ENCODE measurements at regions of chr15 and their contacts with region 1.

Region 1: DNA sequence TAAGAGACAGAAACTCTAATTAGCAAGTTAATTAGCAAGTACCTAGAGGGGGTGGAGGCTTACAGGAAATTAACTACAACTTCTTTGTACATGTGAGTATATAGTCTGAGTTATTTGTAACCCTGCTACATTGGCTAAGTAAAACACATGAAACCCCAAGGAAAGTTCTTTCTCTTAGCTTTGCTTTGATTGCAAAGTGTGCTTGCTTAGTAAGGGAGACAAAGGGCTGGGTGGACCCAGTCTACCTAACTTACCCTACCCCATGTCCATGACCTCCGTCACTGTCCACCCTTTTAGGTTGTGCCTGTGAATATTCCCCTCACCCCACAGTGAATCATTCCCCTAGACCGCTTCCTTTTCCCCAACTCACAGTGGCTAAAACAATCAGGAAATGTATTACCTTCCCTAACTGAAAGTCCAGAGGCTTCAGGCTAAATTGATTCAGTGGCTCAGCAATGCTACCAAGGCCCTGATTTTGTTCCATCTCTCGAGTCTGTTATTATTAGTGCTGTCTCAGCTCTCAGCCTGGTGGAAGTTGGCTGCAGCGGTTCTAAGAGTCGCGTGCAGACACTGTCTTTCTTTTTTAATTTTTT is 31.1 kb upstream of the RYR3 start:
- DNase-seq: no peak
- ATAC-seq: no peak
- H3K4me3 ChIP-seq: no peak overlapping the region
- H3K27ac ChIP-seq: no peak overlapping the region
- H3K4me1 ChIP-seq: no peaks in the 10 kb centered on the region
- H3K27me3 ChIP-seq: no peaks in the 10 kb centered on the region

Region 2: DNA sequence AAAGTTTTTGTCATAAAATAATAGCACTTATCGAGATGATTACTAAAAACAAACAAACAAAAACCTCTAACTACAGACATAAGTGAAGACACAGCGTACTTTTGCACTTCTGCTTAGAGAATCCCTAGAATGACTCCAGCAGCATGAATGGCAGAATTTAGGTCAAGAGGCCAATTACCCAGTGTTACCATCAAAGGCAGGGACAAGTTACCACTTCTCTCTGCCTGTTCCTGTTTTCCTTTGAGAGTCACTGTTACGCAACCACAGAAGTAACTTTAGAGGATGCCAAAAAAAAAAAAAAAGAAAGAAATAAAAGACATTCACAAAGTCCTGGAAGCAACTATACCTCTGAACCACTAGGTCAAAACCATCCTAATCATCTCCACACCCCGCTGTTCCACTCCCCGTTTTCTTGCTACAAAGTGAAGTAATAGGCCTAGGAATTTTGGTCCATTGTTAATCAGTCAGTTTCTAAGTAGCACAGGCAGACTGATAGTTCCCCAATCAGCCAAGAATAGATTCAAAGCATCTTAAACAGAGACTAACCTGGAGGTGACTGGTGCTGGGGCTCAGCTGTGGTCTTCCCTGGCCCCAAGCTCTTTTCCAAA is 127.1 kb before region 1 on chr15:
- intact Hi-C with region 1: no loop called
- DNase-seq: no peak
- ATAC-seq: peak; percentile 41
- H3K4me3 ChIP-seq: no peak overlapping the region
- H3K27ac ChIP-seq: no peak overlapping the region
- H3K4me1 ChIP-seq: no peaks in the 10 kb centered on the region
- H3K27me3 ChIP-seq: no peaks in the 10 kb centered on the region

Region 3: GRCh38 chr15:33242669-33243191 is 37.0 kb before region 1 on chr15:
- intact Hi-C with region 1: loop called in 1 of 2 experiments (anchors 2 kb)
- DNase-seq: no peak
- ATAC-seq: no peak
- H3K4me3 ChIP-seq: no peak overlapping the region
- H3K27ac ChIP-seq: no peak overlapping the region
- H3K4me1 ChIP-seq: peaks cover 0 to 1% of the 10 kb centered on the region in 2 donors
- H3K27me3 ChIP-seq: no peaks in the 10 kb centered on the region

Region 4: DNA sequence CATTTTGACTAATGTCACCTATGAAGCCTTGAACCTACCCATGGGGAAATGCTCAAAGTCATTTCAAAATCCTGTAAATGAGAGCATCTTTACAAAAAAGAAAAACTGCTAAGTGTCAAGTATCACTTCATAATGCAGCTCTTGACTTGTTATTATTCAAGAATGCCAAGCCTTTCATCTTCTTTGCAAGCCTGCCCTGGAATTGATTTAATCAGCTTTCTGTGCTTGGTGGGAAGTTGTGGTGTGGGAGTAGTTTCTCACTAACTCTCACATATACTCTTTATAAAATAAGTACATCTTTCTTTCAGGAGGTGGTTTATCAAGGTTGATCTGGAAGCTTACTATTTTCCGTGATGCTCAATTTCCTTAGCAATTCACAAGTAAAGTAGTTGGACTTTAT is 74.7 kb after region 1 on chr15:
- intact Hi-C with region 1: no loop called
- DNase-seq: no peak
- ATAC-seq: no peak
- H3K4me3 ChIP-seq: no peak overlapping the region
- H3K27ac ChIP-seq: no peak overlapping the region
- H3K4me1 ChIP-seq: no peaks in the 10 kb centered on the region
- H3K27me3 ChIP-seq: no peaks in the 10 kb centered on the region

Measured in aorta (tissue), 5 donors.